Right cardiac atrium (tissue), 5 donors: ENCODE measurements at regions of chr14 and their contacts with region 1.

Region 1: DNA sequence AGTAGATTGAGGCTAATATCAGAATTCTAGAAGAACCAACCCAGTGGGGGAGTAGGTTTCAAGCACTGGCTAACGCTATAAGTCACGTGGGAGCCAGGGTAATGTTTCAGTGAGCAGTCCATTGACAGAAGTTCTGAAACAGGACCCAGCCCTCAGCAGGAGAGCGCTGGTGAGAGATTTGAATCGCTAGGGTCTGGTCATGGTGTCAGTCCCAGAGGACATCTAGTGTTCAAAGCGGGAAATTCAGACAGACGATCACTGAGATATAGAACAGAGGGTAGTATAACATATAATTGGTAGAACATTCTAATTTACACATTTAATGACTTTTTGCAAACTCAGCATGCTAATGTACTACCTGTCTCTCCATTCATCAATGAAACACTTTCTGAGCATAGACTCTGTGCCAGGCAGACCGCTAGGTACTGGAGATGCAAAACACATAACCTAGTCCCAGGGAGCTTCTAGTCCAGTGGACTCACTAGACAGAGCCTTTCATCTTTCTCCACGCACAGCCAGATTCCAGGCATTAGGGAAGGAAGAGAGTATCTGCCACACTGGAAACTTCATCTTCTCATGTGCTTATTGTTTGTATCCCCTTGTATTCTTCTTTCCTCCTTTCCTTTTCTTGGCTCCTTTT is 35.4 kb upstream of the RNASE3 start:
- DNase-seq: peak; percentile 47 to 71 (median 68)
- ATAC-seq: peak; percentile 95 to 97
- H3K4me3 ChIP-seq: no peak overlapping the region
- H3K27ac ChIP-seq: no peak overlapping the region
- H3K4me1 ChIP-seq: no peaks in the 10 kb centered on the region
- H3K27me3 ChIP-seq: no peaks in the 10 kb centered on the region

Region 2: DNA sequence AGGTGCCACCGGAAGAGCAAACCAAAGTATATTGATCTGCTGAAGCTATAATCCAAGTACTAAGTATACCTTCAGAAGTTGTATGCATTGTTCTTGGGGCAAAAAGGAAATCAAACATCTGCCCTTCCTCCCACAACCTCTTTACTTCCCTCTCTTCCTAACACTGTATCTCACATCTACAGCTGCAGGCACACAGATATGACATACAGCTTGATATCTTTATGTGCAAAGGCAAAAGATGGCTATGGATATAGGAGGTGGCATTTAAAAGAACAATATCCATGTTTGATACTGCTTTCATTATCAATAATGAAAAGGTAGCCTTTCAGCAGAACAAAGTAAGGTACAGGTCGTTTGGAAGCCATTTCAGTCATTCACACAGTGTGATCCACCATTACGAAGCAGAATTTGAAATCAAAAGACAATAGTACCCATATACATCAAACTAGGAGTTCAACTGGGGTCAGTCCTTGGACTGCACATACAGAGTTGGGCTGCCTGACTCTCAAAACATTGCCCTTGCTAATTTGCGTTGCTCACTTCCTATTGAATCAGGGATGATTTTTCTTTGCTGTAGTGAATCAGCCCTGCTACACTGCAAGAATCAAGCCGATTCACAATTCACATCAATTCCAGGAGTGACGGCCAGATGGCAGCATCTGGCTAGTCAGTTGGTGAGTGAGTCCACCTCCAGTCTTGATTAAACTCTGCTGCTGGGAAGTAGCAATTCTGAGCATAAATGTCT is 158.3 kb before region 1 on chr14:
- intact Hi-C with region 1: loop called (anchors 2 to 5 kb)
- DNase-seq: peak; percentile 53 to 84 (median 73)
- ATAC-seq: peak; percentile 77 to 91
- H3K4me3 ChIP-seq: no peak overlapping the region
- H3K27ac ChIP-seq: no peak overlapping the region
- H3K4me1 ChIP-seq: no peaks in the 10 kb centered on the region
- H3K27me3 ChIP-seq: no peaks in the 10 kb centered on the region

Region 3: GRCh38 chr14:21039585-21040369 is 184.0 kb after region 1 on chr14:
- intact Hi-C with region 1: loop called in 2 of 4 experiments (anchors 5 kb)
- DNase-seq: peak in 2 of 3 donors; percentile 58 to 67
- ATAC-seq: peak; percentile 74 to 78
- H3K4me3 ChIP-seq: no peak overlapping the region
- H3K27ac ChIP-seq: peak overlapping the region; percentile 70
- H3K4me1 ChIP-seq: peaks cover 22% of the 10 kb centered on the region
- H3K27me3 ChIP-seq: no peaks in the 10 kb centered on the region